Naive thymus-derived CD4-positive, alpha-beta T cell (primary cell): ENCODE measurements at regions of chr10 and their contacts with region 1.

Region 1: DNA sequence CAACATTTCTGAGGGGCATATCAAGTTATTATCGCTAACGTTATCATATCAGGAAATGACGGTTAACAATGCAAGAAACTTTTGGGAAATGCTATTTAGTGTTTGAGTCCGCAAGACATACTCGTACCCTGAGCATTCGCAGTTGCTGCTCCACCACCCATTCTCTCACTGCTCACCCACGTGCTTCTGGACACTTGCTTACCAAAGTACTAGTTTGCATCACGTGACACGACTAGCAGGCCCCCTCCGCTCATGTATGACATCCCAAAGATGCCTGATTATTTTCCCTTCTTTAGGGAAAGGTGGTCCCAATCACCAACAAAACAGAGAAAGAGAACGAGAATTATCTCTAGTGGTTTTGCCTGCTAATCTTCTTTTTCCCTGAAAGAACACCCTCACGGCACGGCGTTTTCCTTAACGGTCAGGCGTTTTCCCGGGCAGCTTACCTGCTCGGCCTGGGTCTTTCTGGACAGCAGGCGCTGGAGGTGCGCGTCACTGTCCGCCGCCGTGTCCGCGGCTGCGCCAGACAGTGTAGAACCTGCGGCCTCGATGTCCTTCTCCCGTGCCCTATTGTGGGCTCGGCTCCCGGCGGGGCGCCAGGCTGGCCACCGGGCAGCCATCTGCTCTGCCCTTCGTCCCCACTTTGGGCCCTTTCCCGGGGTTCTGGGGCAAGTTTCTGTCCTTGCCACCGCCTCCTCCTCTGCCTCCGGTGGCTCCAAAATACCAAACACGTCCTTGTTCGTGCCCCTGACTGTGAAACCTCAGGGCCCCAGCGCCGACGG is at the start of gene SUPV3L1:
- DNase-seq: peak; percentile 72 to 91 (median 87)
- ATAC-seq: peak; percentile 87
- H3K4me3 ChIP-seq: peak within 1 kb of the TSS; percentile 83
- H3K4me3 Mint-ChIP-seq: peak within 1 kb of the TSS; percentile 85 to 98 (median 96)
- H3K27ac ChIP-seq: peak within 1 kb of the TSS; percentile 95
- H3K27ac Mint-ChIP-seq: peak within 1 kb of the TSS; percentile 98 to 100 (median 99)
- H3K4me1 ChIP-seq: peaks cover 12 to 15% of the 10 kb centered on the region in 2 donors
- H3K4me1 Mint-ChIP-seq: peaks cover 22 to 55% (median 38%) of the 10 kb centered on the region in 7 donors
- H3K27me3 ChIP-seq: no peaks in the 10 kb centered on the region
- H3K27me3 Mint-ChIP-seq: no peaks in the 10 kb centered on the region
- total RNA-seq, gene SUPV3L1: 39.3 to 63.2 (median 42.1) TPM

Region 2: GRCh38 chr10:68526626-68527307 is 653.2 kb before region 1 on chr10:
- CTCF ChIA-PET with region 1: no interaction called
- POLR2A ChIA-PET with region 1: no interaction called
- intact Hi-C with region 1: loop called (anchors 1 kb)
- DNase-seq: peak in 1 of 9 donors; percentile 4
- ATAC-seq: no peak
- H3K4me3 ChIP-seq: peak overlapping the region; percentile 91
- H3K4me3 Mint-ChIP-seq: peak overlapping the region; percentile 87 to 94 (median 92)
- H3K27ac ChIP-seq: peak overlapping the region; percentile 96
- H3K27ac Mint-ChIP-seq: peak overlapping the region; percentile 78 to 97 (median 95)
- H3K4me1 ChIP-seq: peaks cover 0 to 5% of the 10 kb centered on the region in 2 donors
- H3K4me1 Mint-ChIP-seq: peaks cover 0 to 20% (median 7%) of the 10 kb centered on the region in 7 donors
- H3K27me3 ChIP-seq: no peaks in the 10 kb centered on the region
- H3K27me3 Mint-ChIP-seq: no peaks in the 10 kb centered on the region

Region 3: GRCh38 chr10:69087590-69088470 is 92.1 kb before region 1 on chr10 and contains the start of gene SRGN:
- CTCF ChIA-PET with region 1: no interaction called
- POLR2A ChIA-PET with region 1: no interaction called
- intact Hi-C with region 1: loop called in 1 of 2 experiments (anchors 1 kb)
- DNase-seq: peak; percentile 54 to 94 (median 87)
- ATAC-seq: peak; percentile 76
- H3K4me3 ChIP-seq: peak within 1 kb of the TSS; percentile 84
- H3K4me3 Mint-ChIP-seq: peak within 1 kb of the TSS; percentile 85 to 95 (median 93)
- H3K27ac ChIP-seq: peak within 1 kb of the TSS; percentile 97
- H3K27ac Mint-ChIP-seq: peak within 1 kb of the TSS; percentile 93 to 99 (median 98)
- H3K4me1 ChIP-seq: peaks cover 28 to 46% of the 10 kb centered on the region in 2 donors
- H3K4me1 Mint-ChIP-seq: peaks cover 25 to 66% (median 58%) of the 10 kb centered on the region in 7 donors
- H3K27me3 ChIP-seq: no peaks in the 10 kb centered on the region
- H3K27me3 Mint-ChIP-seq: no peaks in the 10 kb centered on the region
- total RNA-seq, gene SRGN: 66.6 to 748 (median 227) TPM

Region 4: GRCh38 chr10:69202332-69202731 is 22.4 kb after region 1 on chr10:
- CTCF ChIA-PET with region 1: no interaction called
- POLR2A ChIA-PET with region 1: interaction called, 4 read pairs
- intact Hi-C with region 1: loop called in 1 of 2 experiments (anchors 1 kb)
- DNase-seq: no peak
- ATAC-seq: peak; percentile 67
- H3K4me3 ChIP-seq: no peak overlapping the region
- H3K4me3 Mint-ChIP-seq: peak overlapping the region in 1 of 10 donors; percentile 63
- H3K27ac ChIP-seq: no peak overlapping the region
- H3K27ac Mint-ChIP-seq: peak overlapping the region in 1 of 9 donors; percentile 51
- H3K4me1 ChIP-seq: peaks cover 0 to 35% of the 10 kb centered on the region in 2 donors
- H3K4me1 Mint-ChIP-seq: peaks cover 0 to 60% (median 0%) of the 10 kb centered on the region in 7 donors
- H3K27me3 ChIP-seq: no peaks in the 10 kb centered on the region
- H3K27me3 Mint-ChIP-seq: no peaks in the 10 kb centered on the region

Region 5: GRCh38 chr10:69232252-69232651 is 52.3 kb after region 1 on chr10:
- CTCF ChIA-PET with region 1: no interaction called
- POLR2A ChIA-PET with region 1: no interaction called
- intact Hi-C with region 1: loop called in 1 of 2 experiments (anchors 1 kb)
- DNase-seq: peak in 1 of 9 donors; percentile 16
- ATAC-seq: no peak
- H3K4me3 ChIP-seq: no peak overlapping the region
- H3K4me3 Mint-ChIP-seq: peak overlapping the region in 8 of 10 donors; percentile 77 to 90 (median 84)
- H3K27ac ChIP-seq: no peak overlapping the region
- H3K27ac Mint-ChIP-seq: peak overlapping the region in 7 of 9 donors; percentile 83 to 98 (median 93)
- H3K4me1 ChIP-seq: peaks cover 27 to 40% of the 10 kb centered on the region in 2 donors
- H3K4me1 Mint-ChIP-seq: peaks cover 26 to 68% (median 56%) of the 10 kb centered on the region in 7 donors
- H3K27me3 ChIP-seq: no peaks in the 10 kb centered on the region
- H3K27me3 Mint-ChIP-seq: no peaks in the 10 kb centered on the region

Region 6: GRCh38 chr10:69663369-69663947 is 483.5 kb after region 1 on chr10:
- CTCF ChIA-PET with region 1: no interaction called
- POLR2A ChIA-PET with region 1: no interaction called
- intact Hi-C with region 1: no loop called
- DNase-seq: no peak
- ATAC-seq: no peak
- H3K4me3 ChIP-seq: no peak overlapping the region
- H3K4me3 Mint-ChIP-seq: no peak overlapping the region
- H3K27ac ChIP-seq: no peak overlapping the region
- H3K27ac Mint-ChIP-seq: no peak overlapping the region
- H3K4me1 ChIP-seq: no peaks in the 10 kb centered on the region
- H3K4me1 Mint-ChIP-seq: peaks cover 0 to 4% (median 0%) of the 10 kb centered on the region in 7 donors
- H3K27me3 ChIP-seq: no peaks in the 10 kb centered on the region
- H3K27me3 Mint-ChIP-seq: peaks cover 3 to 19% (median 9%) of the 10 kb centered on the region in 5 donors

Region 7: DNA sequence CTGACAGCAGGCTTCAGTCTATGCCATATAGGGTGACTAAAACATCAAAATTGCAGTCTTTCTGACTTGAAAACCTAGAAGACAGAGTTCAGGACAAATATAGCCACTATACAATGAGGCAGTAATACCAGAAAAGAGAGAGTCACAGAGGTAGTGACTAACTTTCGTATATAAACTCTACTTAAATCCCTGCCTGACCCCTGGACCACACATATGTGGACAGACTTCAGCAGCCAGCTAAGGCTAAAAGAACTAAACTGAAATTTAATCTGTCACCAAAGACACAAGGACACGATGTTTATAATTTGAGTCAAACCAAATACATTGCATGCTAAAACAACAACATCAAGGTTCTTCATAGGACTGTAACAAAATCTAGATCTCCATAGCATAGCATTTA is 808.2 kb after region 1 on chr10:
- CTCF ChIA-PET with region 1: no interaction called
- POLR2A ChIA-PET with region 1: no interaction called
- intact Hi-C with region 1: no loop called
- DNase-seq: no peak
- ATAC-seq: no peak
- H3K4me3 ChIP-seq: no peak overlapping the region
- H3K4me3 Mint-ChIP-seq: no peak overlapping the region
- H3K27ac ChIP-seq: no peak overlapping the region
- H3K27ac Mint-ChIP-seq: no peak overlapping the region
- H3K4me1 ChIP-seq: no peaks in the 10 kb centered on the region
- H3K4me1 Mint-ChIP-seq: no peaks in the 10 kb centered on the region
- H3K27me3 ChIP-seq: no peaks in the 10 kb centered on the region
- H3K27me3 Mint-ChIP-seq: peaks cover 5 to 26% (median 17%) of the 10 kb centered on the region in 5 donors